ENCODE measurements at regions of chr1 and their contacts with region 1.

Region 1: DNA sequence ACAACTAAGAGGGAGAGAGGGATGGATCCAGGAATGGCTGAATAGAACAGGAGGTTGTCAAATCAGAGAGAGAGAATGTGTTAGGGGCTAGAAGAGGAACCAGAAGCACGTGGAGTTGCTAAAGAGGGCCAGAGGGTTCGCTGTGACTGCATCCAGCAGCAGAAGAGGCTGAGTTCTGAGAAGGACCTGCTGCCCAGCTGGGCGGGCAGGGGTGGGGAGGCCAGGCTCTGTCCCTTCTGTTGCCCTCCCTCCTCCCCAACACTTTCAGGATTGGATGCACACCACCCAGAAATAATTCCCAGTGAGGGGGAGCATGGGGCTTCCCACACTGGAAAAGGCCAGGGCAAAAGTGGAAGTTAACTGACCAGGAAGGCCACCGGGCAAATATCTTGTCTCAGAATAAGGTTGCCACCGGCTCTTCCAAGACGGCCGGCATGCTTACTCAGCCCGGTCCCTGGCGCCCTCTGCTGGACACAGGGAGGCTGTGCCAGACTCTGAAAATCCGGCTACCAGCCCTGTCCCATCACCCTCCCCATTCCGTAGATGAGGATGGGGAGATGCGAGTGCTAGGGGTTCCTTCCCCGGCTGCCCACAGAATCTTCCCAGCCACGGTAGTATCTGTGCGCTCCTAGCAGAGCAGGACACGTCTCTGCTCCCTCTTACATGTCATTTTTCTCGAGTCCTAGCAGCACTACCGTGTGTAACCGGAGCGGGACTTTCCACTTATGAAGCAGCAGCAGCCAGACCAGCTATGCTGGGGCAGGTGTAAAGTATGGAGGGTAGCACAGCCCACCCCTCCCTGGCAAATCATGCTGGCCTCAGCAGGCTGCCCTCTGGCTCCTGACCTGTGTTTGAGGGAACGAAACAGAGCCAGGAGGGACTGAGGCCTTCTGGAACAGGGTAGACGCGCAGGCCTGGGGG is 46.8 kb upstream of the A3GALT2 start:
- DNase-seq: peak; percentile 81
- H3K4me3 ChIP-seq: no peak overlapping the region
- H3K27ac ChIP-seq: no peak overlapping the region
- H3K4me1 ChIP-seq: no peaks in the 10 kb centered on the region
- CTCF ChIP-seq: peak; percentile 92

Region 2: GRCh38 chr1:33137800-33138199 is 229.9 kb before region 1 on chr1:
- CTCF ChIA-PET with region 1: no interaction called
- POLR2A ChIA-PET with region 1: no interaction called
- intact Hi-C with region 1: loop called (anchors 1 kb)
- DNase-seq: peak; percentile 65
- H3K4me3 ChIP-seq: no peak overlapping the region
- H3K27ac ChIP-seq: no peak overlapping the region
- H3K4me1 ChIP-seq: no peaks in the 10 kb centered on the region
- CTCF ChIP-seq: peak; percentile 86

Region 3: DNA sequence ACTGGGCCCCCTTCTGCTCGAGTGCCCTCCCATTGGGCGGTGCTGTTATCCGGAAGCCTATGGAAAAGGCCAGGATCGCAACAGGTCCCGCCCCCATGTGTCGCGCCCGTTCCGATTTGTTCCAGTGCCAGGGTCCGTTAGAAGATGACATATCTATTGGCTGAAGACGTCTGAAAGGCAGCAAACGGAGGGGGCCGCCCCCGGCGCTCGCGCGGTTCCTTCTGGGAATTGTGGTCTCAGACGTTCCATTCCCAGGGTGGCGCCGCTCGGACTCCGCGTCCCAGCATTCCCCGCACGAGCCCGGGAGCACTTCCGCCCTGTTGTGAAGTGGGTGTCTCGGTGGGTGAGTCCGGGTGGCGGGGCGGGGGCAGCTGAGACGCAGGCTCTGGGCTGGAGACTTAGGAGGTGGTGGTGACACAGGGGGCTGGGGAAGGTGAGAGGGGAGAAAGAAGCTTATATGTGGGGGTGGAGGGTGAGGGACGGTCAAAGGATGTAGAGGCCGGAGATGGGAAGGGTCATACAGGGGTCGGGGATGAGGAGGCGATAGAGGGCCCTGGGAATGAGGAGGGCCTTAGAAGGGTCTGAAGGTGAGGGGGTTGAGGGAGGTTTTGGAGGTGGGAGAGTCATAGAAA is 104.7 kb after region 1 on chr1 and contains the start of gene ZSCAN20:
- CTCF ChIA-PET with region 1: no interaction called
- POLR2A ChIA-PET with region 1: no interaction called
- intact Hi-C with region 1: loop called (anchors 1 kb)
- DNase-seq: peak; percentile 90
- H3K4me3 ChIP-seq: peak within 1 kb of the TSS; percentile 74
- H3K27ac ChIP-seq: no peak within 1 kb of the TSS
- H3K4me1 ChIP-seq: peaks cover 18% of the 10 kb centered on the region
- CTCF ChIP-seq: no peak
- total RNA-seq, gene ZSCAN20: 3.0 and 4.0 TPM in 2 replicates

Measured in OCI-LY7 (cell line).